ENCODE measurements at regions of chr4 and their contacts with region 1.

Region 1: GRCh38 chr4:152820073-152820472 is 40.3 kb downstream of the ARFIP1 start:
- DNase-seq: no peak
- H3K4me3 Mint-ChIP-seq: no peak overlapping the region
- H3K27ac Mint-ChIP-seq: no peak overlapping the region
- H3K4me1 Mint-ChIP-seq: peaks cover 12% of the 10 kb centered on the region
- H3K27me3 Mint-ChIP-seq: no peaks in the 10 kb centered on the region

Region 2: GRCh38 chr4:152864361-152864760 is 44.3 kb after region 1 on chr4:
- CTCF ChIA-PET with region 1: no interaction called
- intact Hi-C with region 1: no loop called
- DNase-seq: no peak
- H3K4me3 Mint-ChIP-seq: no peak overlapping the region
- H3K27ac Mint-ChIP-seq: no peak overlapping the region
- H3K4me1 Mint-ChIP-seq: no peaks in the 10 kb centered on the region
- H3K27me3 Mint-ChIP-seq: no peaks in the 10 kb centered on the region

Region 3: DNA sequence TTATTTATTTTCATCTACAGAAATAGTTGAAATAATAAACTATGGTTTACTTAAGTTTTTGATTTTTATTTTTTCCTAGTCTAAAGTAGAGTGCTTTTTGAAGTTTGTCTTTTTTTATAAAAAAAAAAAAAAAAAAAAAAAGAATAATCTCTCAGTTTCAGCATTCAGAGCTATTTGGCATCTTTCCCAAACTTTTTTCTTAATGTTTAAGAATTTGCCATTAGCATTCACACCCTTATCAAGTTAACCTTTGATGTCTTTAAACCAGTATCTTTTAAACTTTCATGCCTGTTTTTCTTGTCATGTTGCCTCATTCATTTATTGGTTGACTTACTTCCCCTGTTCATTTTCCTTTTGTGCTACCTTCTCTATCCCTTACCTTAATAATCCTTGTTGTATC is 55.2 kb after region 1 on chr4:
- CTCF ChIA-PET with region 1: no interaction called
- intact Hi-C with region 1: loop called (anchors 5 kb)
- DNase-seq: no peak
- H3K4me3 Mint-ChIP-seq: no peak overlapping the region
- H3K27ac Mint-ChIP-seq: no peak overlapping the region
- H3K4me1 Mint-ChIP-seq: no peaks in the 10 kb centered on the region
- H3K27me3 Mint-ChIP-seq: no peaks in the 10 kb centered on the region

Measured in activated naive CD4-positive, alpha-beta T cell treated with anti-CD3 and anti-CD28 coated beads for 36 hours (primary cell).